Cardiac septum (tissue), 1 donor: ENCODE measurements at regions of chr1 and their contacts with region 1.

Region 1: GRCh38 chr1:200561856-200562214 is 58.7 kb downstream of the KIF14 start:
- DNase-seq: no peak

Region 2: GRCh38 chr1:201042779-201043461 is 481.1 kb after region 1 on chr1:
- intact Hi-C with region 1: loop called (anchors 10 kb)
- DNase-seq: no peak